Mammary epithelial cell (primary cell): ENCODE measurements at regions of chr1 and their contacts with region 1.

Region 1: DNA sequence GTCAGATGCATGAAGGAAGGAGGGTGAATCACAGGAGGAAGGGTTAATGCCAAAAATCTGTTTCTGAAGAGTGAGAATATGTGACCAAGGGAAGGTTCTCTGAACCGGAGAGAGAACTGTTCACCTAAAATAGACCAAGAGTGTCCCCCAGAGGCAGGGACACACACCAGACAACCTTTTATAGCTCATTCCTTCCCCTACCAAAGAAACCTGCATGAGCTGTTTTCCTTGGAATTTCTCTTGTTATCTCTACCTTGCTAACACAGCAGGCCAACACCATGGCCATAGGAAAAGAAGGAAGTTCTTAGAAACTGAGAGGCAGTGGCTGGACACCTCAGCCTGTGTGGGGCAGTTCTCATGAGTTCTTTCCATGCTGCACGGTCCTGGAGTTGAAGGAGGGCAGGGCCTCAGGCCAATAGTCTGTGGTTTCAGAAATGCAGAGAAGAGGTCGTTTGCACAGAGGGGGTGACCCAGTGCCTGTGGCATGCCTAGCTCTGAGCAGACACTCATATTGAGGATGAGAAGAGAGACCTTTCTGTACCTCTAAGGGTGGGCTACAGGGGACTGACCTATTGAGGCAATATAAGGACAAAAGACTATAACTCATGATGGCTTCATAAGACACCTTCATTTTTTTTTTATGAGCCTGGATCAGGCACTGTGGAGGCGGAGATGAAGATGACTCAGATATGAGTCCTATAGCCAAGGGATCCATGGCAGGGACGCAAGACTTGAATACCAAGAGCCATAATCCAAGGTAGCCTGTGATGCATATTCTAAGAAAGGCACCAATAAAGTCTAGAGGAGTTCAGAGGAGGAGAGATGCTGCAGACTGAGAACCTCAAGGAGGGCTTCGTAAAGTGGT is 39.4 kb downstream of the IGFN1 start:
- DNase-seq: peak; percentile 75
- H3K4me3 ChIP-seq: no peak overlapping the region
- H3K27ac ChIP-seq: no peak overlapping the region
- H3K4me1 ChIP-seq: peaks cover 14% of the 10 kb centered on the region
- H3K27me3 ChIP-seq: no peaks in the 10 kb centered on the region
- CTCF ChIP-seq: no peak

Region 2: GRCh38 chr1:200989337-200989736 is 240.7 kb before region 1 on chr1:
- CTCF ChIA-PET with region 1: no interaction called
- dilution Hi-C with region 1: loop called (anchors 5 kb)
- in situ Hi-C with region 1: no loop called
- intact Hi-C with region 1: no loop called
- DNase-seq: no peak
- H3K4me3 ChIP-seq: no peak overlapping the region
- H3K27ac ChIP-seq: no peak overlapping the region
- H3K4me1 ChIP-seq: no peaks in the 10 kb centered on the region
- H3K27me3 ChIP-seq: peaks cover 3% of the 10 kb centered on the region
- CTCF ChIP-seq: no peak

Region 3: GRCh38 chr1:201149400-201149799 is 80.6 kb before region 1 on chr1:
- CTCF ChIA-PET with region 1: no interaction called
- dilution Hi-C with region 1: no loop called
- in situ Hi-C with region 1: loop called in 1 of 2 experiments (anchors 10 kb)
- intact Hi-C with region 1: no loop called
- DNase-seq: no peak
- H3K4me3 ChIP-seq: no peak overlapping the region
- H3K27ac ChIP-seq: no peak overlapping the region
- H3K4me1 ChIP-seq: peaks cover 7% of the 10 kb centered on the region
- H3K27me3 ChIP-seq: no peaks in the 10 kb centered on the region
- CTCF ChIP-seq: peak; percentile 56 to 58

Region 4: DNA sequence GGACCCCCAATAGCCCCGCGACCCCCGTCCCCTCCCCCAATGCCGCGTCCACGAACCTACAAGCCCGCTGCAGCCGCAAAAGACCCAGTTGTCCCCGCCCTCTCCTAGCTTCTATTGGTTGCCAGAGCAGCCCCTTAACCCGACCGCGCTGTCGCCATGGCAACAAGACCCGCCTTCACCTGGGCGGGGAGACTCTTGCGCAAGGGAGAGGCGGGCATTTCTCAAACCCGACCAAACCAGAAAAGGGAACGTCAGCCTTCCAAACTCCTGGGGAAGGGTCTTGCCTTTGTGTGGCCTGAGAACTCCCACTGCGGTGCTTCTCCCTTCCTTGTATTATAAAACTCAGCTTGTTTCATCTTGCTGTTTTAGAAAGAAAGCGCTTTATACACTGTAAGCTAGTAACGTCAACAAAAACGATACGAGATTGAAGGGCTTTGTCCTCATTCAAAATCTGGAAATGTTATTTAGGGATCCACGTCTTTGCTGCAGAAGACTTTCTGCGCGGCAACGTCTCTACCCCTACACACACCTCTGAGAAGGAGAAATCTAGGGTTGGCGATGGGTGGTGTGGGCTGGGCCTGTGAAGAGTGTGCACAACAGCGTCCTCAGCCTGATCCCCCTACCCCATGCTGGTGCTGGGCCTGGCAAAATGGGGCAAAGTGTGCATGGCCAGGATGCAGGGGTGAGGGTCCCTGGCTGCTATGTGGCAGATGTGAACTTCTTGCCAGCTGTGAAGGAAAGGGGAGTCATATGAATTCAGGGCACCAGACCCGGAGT is 75.4 kb before region 1 on chr1 and contains the start of gene TMEM9:
- CTCF ChIA-PET with region 1: no interaction called
- dilution Hi-C with region 1: loop called (anchors 5 kb)
- in situ Hi-C with region 1: loop called in 1 of 2 experiments (anchors 10 kb)
- intact Hi-C with region 1: no loop called
- DNase-seq: peak; percentile 84
- H3K4me3 ChIP-seq: peak within 1 kb of the TSS; percentile 39 to 79 (median 67)
- H3K27ac ChIP-seq: no peak within 1 kb of the TSS
- H3K4me1 ChIP-seq: peaks cover 12% of the 10 kb centered on the region
- H3K27me3 ChIP-seq: no peaks in the 10 kb centered on the region
- CTCF ChIP-seq: no peak
- total RNA-seq, gene TMEM9: 54.2 to 65.3 TPM

Region 5: DNA sequence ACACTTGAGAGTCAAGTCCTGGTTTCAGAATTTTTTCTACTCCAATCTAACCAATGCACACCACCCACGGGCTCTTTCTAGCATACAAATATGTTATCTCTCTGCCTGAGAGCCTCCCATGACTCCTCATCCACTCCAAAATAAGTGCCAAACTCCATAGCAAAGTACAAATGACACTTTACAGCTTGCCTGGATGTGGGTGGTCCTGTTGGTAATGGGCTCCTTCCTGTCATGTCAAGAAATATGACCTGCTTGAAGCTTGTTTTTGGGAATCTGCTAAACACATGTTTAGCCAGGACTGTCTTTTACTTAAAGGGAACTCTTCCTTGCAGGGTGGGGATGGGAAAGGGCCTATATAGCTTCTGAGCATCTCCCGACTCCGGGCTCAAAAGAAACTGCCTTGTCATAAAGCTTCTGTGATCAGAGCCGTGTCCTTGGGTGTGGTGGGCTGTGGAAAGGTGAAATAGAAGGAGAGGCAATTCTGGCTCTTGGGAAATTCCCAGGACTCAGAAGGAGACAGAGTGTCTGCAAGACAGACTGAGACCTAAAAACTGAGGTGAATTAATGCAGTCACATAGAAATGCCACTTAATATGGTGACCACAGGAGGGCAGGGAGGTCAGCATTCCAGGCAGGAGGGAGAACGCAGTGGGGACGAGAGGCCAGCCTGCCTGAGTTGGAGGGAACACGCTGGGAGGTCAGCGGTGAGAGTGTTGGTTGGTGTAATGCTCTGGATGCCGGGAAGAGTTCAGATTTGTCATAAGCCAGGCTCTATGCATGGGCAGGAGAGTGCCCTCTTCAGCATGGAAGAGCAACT is 45.5 kb before region 1 on chr1:
- CTCF ChIA-PET with region 1: no interaction called
- dilution Hi-C with region 1: loop called (anchors 5 kb)
- in situ Hi-C with region 1: no loop called
- intact Hi-C with region 1: no loop called
- DNase-seq: peak; percentile 67
- H3K4me3 ChIP-seq: no peak overlapping the region
- H3K27ac ChIP-seq: no peak overlapping the region
- H3K4me1 ChIP-seq: peaks cover 12% of the 10 kb centered on the region
- H3K27me3 ChIP-seq: no peaks in the 10 kb centered on the region
- CTCF ChIP-seq: peak; percentile 67 to 79

Region 6: DNA sequence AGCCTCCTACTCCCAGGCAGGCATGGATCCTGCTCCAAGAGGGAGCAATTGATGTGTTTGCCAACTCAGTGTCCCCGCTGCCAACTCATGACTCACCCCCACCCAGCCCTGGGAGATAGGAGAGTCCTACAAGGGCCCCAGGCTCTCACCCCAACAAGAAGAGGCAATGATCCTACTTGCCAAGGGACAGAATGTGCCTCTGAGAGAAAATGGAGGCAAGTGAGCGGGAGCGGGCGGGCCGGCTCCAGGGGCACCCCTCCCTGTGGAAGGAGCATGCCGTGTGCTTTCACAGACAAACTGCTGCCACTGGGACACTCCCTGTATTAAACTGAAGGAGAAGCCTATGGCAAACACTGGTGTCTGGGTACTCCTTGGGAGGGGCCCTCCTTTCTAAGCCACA is 70.0 kb after region 1 on chr1:
- CTCF ChIA-PET with region 1: no interaction called
- dilution Hi-C with region 1: loop called (anchors 5 kb)
- in situ Hi-C with region 1: no loop called
- intact Hi-C with region 1: no loop called
- DNase-seq: peak; percentile 98
- H3K4me3 ChIP-seq: no peak overlapping the region
- H3K27ac ChIP-seq: peak overlapping the region; percentile 87
- H3K4me1 ChIP-seq: peaks cover 81% of the 10 kb centered on the region
- H3K27me3 ChIP-seq: no peaks in the 10 kb centered on the region
- CTCF ChIP-seq: no peak

Region 7: DNA sequence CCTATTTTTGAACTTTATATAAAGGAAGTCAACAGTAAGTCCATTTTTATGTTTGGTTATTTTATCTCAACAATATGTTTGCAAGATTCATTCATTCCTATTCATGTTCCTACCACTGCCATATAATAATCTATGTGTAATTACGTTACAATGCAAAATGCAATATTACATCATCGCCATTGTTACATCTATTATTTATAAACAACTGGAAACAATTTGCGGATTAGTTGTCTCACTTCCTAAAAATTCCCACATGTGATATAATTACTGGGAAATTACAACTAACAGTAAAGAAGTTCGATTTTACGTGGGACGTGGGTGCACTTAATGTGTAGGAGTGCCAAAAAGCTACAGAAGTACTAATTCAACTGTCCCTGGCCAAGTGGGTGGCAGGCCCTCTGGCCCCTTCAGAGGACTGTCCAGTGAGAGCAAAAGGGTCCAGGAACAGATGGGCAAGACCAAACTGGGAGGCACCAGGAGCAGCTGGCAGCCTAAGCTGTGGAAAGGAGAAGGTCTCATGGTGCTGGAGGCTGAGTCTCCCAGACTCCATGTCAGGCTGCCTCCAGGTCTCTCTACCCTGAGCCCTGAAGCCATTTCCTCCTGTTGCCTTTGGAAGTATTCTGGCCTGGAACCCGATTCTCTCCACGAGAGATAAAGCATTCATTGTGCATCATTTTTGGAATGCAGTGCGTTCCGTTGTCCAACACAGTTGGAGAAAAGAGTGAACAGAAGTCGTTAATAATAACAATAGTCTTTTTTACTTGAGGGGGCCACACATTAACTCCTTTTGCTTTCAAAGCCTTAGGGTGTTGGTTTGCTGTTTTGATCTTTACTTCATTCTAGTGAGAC is 104.5 kb after region 1 on chr1:
- CTCF ChIA-PET with region 1: no interaction called
- dilution Hi-C with region 1: loop called (anchors 5 kb)
- in situ Hi-C with region 1: no loop called
- intact Hi-C with region 1: no loop called
- DNase-seq: no peak
- H3K4me3 ChIP-seq: no peak overlapping the region
- H3K27ac ChIP-seq: peak overlapping the region; percentile 62
- H3K4me1 ChIP-seq: peaks cover 25% of the 10 kb centered on the region
- H3K27me3 ChIP-seq: no peaks in the 10 kb centered on the region
- CTCF ChIP-seq: no peak